A549 (cell line): ENCODE measurements at regions of chr9 and their contacts with region 1.

Region 1: DNA sequence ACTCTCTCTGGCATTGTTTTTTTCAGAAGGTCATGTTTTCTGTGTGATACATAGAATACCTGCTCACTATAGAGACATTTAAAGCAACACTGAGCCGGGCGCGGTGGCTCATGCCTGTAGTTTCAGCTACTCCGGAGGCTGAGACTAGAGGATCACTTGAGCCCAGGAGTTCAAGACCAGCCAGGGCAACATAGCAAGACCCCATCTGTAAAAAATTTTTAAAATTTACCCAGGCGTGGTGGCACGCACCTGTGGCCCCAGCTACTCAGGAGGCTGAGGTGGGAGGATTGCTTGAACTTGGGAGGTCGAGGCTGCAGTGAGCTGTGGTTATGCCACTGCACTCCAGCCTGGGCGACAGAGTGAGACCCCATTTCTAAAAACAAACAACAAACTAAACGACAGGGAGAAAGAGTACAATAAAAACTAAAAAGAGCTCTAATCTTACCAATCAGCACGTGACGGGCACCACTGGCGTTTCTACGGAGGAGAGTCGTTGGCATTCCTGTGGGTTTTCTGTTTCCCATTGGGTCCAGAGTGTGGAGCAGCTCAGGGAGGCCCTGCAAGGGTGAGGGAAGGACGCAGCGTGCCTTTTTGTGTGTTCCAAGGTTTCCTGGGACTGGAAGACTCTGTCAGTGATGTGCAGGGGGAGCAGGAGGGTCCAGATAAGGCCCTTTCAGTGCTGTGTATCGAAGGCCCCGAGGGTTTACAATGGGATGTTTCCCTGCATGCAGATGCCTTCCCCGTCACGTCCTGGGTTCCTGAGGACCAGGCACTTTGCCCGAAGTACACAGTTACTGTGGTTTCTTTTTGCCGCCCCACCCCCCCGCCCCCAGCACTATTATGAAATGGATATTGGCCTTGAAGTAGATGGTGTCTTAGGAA is 7.2 kb upstream of the RNU6ATAC start:
- DNase-seq: no peak
- ATAC-seq: no peak
- H3K4me3 ChIP-seq: no peak overlapping the region
- H3K27ac ChIP-seq: peak overlapping the region in 1 of 2 experiments; percentile 5; a peak in 1 of 6 replicates
- H3K4me1 ChIP-seq: peaks cover 20% of the 10 kb centered on the region
- CTCF ChIP-seq: no peak
- EP300 ChIP-seq: no peak
- POLR2A ChIP-seq: no peak
- RAD21 ChIP-seq: no peak

Region 2: GRCh38 chr9:134198791-134199190 is 27.2 kb after region 1 on chr9:
- CTCF ChIA-PET with region 1: interaction called, 17 read pairs
- POLR2A ChIA-PET with region 1: no interaction called
- DNase-seq: no peak
- ATAC-seq: no peak
- H3K4me3 ChIP-seq: no peak overlapping the region
- H3K27ac ChIP-seq: no peak overlapping the region
- H3K4me1 ChIP-seq: no peaks in the 10 kb centered on the region
- CTCF ChIP-seq: no peak
- EP300 ChIP-seq: no peak
- POLR2A ChIP-seq: no peak
- RAD21 ChIP-seq: no peak

Region 3: GRCh38 chr9:134365791-134366688 is 194.5 kb after region 1 on chr9:
- CTCF ChIA-PET with region 1: interaction called, 10 read pairs
- POLR2A ChIA-PET with region 1: no interaction called
- DNase-seq: peak; percentile 81 to 86
- ATAC-seq: peak; percentile 73 to 88
- H3K4me3 ChIP-seq: 0 out of 3 replicates have a peak overlapping the region, but pooled peaks have one; percentile 15
- H3K27ac ChIP-seq: peak overlapping the region; percentile 88 to 90
- H3K4me1 ChIP-seq: peaks cover 33% of the 10 kb centered on the region
- CTCF ChIP-seq: no peak
- EP300 ChIP-seq: no peak
- POLR2A ChIP-seq: 0 out of 2 replicates have a peak, but pooled peaks have one; percentile 8
- RAD21 ChIP-seq: peak in 1 of 2 experiments; percentile 35; a peak in 2 of 5 replicates

Region 4: GRCh38 chr9:134391314-134392231 is 220.0 kb after region 1 on chr9:
- CTCF ChIA-PET with region 1: interaction called, 13 read pairs
- POLR2A ChIA-PET with region 1: no interaction called
- DNase-seq: no peak
- ATAC-seq: no peak
- H3K4me3 ChIP-seq: no peak overlapping the region
- H3K27ac ChIP-seq: peak overlapping the region in 1 of 2 experiments; percentile 25; a peak in 1 of 6 replicates
- H3K4me1 ChIP-seq: peaks cover 21% of the 10 kb centered on the region
- CTCF ChIP-seq: no peak
- EP300 ChIP-seq: no peak
- POLR2A ChIP-seq: no peak
- RAD21 ChIP-seq: no peak

Region 5: DNA sequence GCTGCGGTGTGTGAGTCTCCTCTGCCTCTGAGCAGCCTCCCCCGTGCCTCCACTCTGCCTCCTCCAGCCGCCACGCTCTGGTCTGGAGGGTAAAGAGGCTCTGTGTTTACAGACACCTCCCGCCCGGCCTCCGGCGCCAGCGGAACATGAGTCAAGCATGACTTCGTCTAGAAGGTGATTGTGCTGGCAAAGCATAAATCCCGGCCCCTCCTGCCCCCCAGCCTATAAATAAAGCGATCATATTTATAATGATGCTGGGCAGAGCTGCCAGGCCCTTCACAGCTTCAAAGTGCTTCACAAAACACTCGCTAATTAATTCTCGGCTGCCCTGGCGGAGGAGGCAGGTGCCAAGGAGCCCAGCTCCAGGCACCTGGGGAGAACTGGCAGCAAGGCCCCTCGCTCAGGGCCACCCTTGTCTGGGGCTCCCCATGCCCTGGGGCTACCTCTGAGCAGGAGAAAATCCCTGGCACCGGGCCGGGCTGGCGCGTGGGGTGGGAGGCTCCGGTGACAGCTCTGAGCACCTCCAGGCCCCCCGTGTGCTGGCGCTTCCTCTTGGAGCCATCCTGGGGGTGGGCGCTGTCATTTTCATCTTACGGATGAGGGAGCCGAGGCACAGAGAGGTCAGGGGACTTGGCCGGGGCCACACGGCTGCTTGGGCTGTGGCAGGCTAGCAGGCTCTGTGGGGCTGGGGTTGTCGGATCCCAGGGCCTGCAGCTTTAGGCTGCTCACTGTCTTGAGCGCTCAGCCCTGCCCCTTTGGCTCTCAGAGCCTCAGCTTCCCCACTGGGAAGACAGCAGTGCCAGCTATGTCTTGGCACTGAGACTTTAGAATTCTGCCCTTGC is 242.6 kb after region 1 on chr9:
- CTCF ChIA-PET with region 1: interaction called, 33 read pairs
- POLR2A ChIA-PET with region 1: no interaction called
- DNase-seq: peak; percentile 77 to 87
- ATAC-seq: peak; percentile 54 to 84
- H3K4me3 ChIP-seq: no peak overlapping the region
- H3K27ac ChIP-seq: peak overlapping the region; percentile 80 to 100
- H3K4me1 ChIP-seq: peaks cover 63% of the 10 kb centered on the region
- CTCF ChIP-seq: no peak
- EP300 ChIP-seq: no peak
- POLR2A ChIP-seq: no peak
- RAD21 ChIP-seq: peak; percentile 5 to 21; a peak in 2 of 5 replicates